ENCODE measurements at regions of chr13 and their contacts with region 1.

Region 1: GRCh38 chr13:106536244-106537034 is 977 bp upstream of the EFNB2 start:
- DNase-seq: peak; percentile 75
- CTCF ChIP-seq: peak; percentile 99

Region 2: GRCh38 chr13:106083620-106084350 is 452.7 kb before region 1 on chr13:
- CTCF ChIA-PET with region 1: interaction called, 23 read pairs
- POLR2A ChIA-PET with region 1: no interaction called
- DNase-seq: peak; percentile 35
- CTCF ChIP-seq: peak; percentile 32

Region 3: DNA sequence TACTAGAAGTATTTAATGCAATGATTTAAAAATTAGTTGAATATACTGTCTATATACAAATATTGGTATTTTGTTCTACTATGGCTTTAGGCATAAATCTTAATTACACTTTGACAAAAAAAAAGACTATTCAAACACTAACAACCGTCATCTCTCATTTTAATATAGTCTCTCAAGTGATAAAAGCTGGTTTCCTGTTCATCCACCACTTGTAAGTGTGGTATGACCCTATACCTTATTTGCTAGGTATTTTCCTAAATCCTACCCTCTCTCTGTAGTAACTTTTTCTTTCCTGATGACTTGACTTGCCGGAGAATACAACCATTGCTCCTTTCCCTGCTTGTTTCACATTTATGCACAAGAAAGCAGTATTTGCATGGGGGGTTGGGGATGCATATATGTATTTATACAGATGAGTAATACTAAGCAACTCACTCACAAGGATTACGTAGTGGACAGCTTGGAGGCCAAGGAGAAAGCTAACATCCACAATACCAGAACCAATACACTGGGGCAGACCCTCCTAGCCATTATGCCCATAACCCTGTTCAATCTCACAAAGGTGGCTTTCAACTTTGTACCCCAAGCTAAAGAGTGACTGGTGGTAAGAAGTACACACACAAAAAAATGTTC is 11.7 kb after region 1 on chr13:
- CTCF ChIA-PET with region 1: interaction called, 19 read pairs
- POLR2A ChIA-PET with region 1: interaction called, 3 read pairs
- DNase-seq: no peak
- CTCF ChIP-seq: no peak

Region 4: DNA sequence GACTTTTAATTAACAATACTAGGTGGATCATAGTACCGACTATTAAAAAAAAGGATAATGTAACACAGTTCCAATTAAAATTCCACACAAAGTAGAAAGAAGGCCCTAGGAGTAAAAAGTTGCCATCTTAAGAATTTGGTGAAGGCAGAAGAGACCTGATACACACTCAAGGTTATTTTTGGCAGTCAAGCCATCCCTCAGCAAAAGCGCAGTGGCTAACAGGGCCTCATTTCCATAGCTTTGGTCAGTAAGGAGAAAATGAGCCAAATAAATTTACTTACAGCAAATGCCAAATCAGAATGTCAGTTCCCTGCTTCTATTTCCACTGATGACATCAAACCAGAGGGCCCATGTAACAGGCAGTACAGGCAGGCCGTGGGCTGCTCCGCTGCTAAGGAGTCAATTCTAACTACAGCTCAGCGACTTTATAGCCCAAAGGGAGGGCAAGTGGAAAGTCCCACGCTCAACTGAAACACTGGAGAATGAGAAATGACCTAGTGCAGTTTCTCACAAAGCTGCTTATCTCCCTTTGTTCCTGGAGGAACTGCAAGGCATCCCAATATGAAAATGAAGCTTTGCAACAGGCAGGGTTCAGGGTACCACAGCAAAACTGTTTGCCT is 25.2 kb after region 1 on chr13:
- CTCF ChIA-PET with region 1: interaction called, 31 read pairs
- POLR2A ChIA-PET with region 1: interaction called, 5 read pairs
- DNase-seq: peak; percentile 54
- CTCF ChIP-seq: no peak

Region 5: DNA sequence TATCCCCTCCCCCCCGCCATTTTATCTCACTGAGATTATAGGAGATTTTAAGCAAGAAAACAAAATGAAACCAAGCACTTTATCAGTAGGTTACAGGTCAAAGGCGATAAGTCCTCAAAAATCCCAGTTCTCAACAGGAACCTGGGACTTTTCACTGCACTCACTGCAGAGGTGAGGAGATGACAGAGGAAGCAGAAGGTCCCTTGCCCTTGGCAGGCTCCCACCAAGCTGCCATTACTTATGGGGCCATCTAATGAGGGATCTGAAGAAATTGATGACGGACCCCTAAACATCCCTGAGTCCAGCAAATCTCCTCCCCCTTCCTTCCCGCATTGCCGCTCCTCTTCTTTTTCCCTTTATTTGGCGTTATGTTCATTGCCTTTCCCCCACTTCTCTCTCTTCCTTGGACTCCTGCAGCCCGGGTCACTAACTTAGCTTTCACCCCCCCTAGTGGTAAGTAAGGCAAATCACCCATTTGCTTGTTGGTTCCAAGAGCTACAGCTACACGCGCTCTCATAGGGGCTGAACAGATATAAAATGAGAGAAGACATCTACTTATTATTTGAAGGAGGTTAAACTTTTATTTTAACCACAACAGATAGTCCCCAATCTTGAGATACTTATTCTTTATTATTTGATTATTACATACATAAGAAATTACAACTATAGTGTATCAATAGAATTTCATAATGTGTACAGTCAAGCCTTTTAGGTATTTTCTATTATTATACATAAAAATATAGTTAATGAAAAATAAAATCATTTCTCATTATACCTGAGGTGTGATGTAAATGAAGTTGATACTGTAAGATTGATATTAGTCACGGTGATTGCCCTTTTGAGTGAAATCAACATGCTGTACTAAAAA is 83.5 kb after region 1 on chr13:
- CTCF ChIA-PET with region 1: interaction called, 16 read pairs
- POLR2A ChIA-PET with region 1: no interaction called
- DNase-seq: peak; percentile 57
- CTCF ChIP-seq: peak; percentile 77